Activated CD4-positive, alpha-beta T cell treated with anti-CD3 and anti-CD28 coated beads for 36 hours (primary cell): ENCODE measurements at regions of chr17 and their contacts with region 1.

Region 1: GRCh38 chr17:81860756-81861518 is 602 bp upstream of the P4HB start:
- DNase-seq: peak; percentile 99
- ATAC-seq: peak; percentile 91
- H3K4me3 Mint-ChIP-seq: peak overlapping the region; percentile 99
- H3K27ac Mint-ChIP-seq: peak overlapping the region; percentile 98
- H3K4me1 Mint-ChIP-seq: peaks cover 50% of the 10 kb centered on the region
- H3K27me3 Mint-ChIP-seq: no peaks in the 10 kb centered on the region

Region 2: GRCh38 chr17:81523475-81524340 is 337.2 kb before region 1 on chr17:
- CTCF ChIA-PET with region 1: no interaction called
- POLR2A ChIA-PET with region 1: no interaction called
- intact Hi-C with region 1: no loop called
- DNase-seq: no peak
- ATAC-seq: no peak
- H3K4me3 Mint-ChIP-seq: no peak overlapping the region
- H3K27ac Mint-ChIP-seq: no peak overlapping the region
- H3K4me1 Mint-ChIP-seq: no peaks in the 10 kb centered on the region
- H3K27me3 Mint-ChIP-seq: peaks cover 3% of the 10 kb centered on the region

Region 3: DNA sequence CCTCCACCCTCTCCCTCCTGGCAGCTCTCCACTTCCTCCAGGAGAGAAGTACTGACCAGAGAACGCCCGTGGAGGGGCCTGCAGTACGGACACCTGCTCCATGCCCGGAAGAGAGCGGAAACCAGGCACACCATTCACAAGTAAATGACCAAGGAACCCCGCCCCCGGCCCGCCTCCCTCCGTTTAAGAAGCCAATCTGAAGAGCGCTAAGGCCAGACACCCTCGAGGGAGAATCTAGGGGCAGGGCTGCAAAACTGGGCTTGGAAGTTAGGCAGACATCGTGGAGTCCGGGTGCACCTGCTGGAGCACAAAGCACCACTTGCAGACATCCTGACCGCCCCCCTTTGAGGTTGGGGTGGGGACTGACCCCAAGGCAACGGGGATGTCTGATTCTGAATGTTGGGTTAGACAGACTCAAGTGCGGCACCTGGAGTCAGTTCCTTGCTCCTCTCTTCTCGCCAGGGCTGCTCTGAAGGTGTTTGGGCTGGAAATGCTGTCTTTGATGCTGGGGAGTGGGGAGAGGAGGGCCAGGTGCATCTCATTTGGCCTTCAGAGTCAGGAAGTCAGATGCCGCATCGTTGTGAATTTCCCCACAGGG is 307.8 kb before region 1 on chr17:
- CTCF ChIA-PET with region 1: no interaction called
- POLR2A ChIA-PET with region 1: no interaction called
- intact Hi-C with region 1: loop called in 1 of 2 experiments (anchors 1 kb)
- DNase-seq: peak; percentile 91
- ATAC-seq: peak; percentile 78
- H3K4me3 Mint-ChIP-seq: peak overlapping the region; percentile 89
- H3K27ac Mint-ChIP-seq: peak overlapping the region; percentile 86
- H3K4me1 Mint-ChIP-seq: peaks cover 38% of the 10 kb centered on the region
- H3K27me3 Mint-ChIP-seq: no peaks in the 10 kb centered on the region

Region 4: GRCh38 chr17:81566461-81567126 is 294.3 kb before region 1 on chr17:
- CTCF ChIA-PET with region 1: no interaction called
- POLR2A ChIA-PET with region 1: no interaction called
- intact Hi-C with region 1: no loop called
- DNase-seq: no peak
- ATAC-seq: no peak
- H3K4me3 Mint-ChIP-seq: no peak overlapping the region
- H3K27ac Mint-ChIP-seq: no peak overlapping the region
- H3K4me1 Mint-ChIP-seq: no peaks in the 10 kb centered on the region
- H3K27me3 Mint-ChIP-seq: no peaks in the 10 kb centered on the region

Region 5: GRCh38 chr17:81702971-81703746 is 157.8 kb before region 1 on chr17 and contains the start of gene MRPL12:
- CTCF ChIA-PET with region 1: no interaction called
- POLR2A ChIA-PET with region 1: interaction called, 3 read pairs
- intact Hi-C with region 1: loop called in 1 of 2 experiments (anchors 1 kb)
- DNase-seq: peak; percentile 95
- ATAC-seq: peak; percentile 89
- H3K4me3 Mint-ChIP-seq: peak within 1 kb of the TSS; percentile 86
- H3K27ac Mint-ChIP-seq: peak within 1 kb of the TSS; percentile 97
- H3K4me1 Mint-ChIP-seq: peaks cover 24% of the 10 kb centered on the region
- H3K27me3 Mint-ChIP-seq: no peaks in the 10 kb centered on the region
- total RNA-seq, gene MRPL12: 94.0 to 116 TPM

Region 6: DNA sequence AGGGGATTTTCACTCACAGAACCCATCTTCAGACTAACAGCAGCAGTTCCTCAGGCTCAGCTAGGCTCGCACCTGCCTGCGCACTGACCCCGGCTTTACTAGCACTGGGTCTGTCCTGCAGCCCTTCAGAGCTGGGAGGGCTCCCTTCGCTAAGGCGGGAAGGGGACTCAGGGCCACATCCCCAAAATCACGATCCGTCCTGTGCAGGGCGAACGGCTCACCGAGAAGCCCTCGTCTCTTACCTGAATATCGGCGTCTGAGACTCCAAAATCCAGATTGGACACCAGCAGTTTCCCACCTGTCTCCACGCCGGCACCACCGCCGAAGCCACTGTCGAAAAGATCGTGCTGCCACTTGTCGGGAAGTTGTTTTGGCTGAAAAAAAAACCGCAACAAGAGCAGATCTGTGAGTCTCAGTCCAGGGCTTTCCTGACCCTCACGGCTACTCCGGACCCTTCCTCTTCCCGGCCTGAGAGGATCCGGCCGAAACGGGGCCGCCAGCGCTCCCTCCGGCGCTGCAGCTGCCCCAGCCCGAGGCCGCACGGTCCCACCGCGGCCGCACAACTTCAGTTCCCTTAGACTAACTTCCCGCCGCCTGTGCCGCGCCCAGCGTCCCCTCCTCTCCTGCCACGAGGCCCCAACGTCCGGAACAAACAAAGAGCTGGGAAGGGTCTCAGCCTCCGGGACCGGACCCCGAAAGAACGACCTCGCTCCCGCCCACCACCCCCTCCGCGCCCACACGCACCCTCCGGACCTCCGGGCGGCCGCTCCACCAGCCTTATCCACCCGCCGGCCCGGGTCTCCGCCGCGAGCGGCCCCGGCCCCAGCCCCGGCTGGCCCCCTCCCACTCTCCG is 29.7 kb after region 1 on chr17:
- CTCF ChIA-PET with region 1: interaction called, 5 read pairs
- POLR2A ChIA-PET with region 1: interaction called, 5 read pairs
- intact Hi-C with region 1: loop called (anchors 1 kb)
- DNase-seq: peak; percentile 51
- ATAC-seq: no peak
- H3K4me3 Mint-ChIP-seq: peak overlapping the region; percentile 85
- H3K27ac Mint-ChIP-seq: peak overlapping the region; percentile 93
- H3K4me1 Mint-ChIP-seq: peaks cover 32% of the 10 kb centered on the region
- H3K27me3 Mint-ChIP-seq: no peaks in the 10 kb centered on the region

Region 7: GRCh38 chr17:81941790-81942553 is 81.0 kb after region 1 on chr17:
- CTCF ChIA-PET with region 1: no interaction called
- POLR2A ChIA-PET with region 1: no interaction called
- intact Hi-C with region 1: loop called in 1 of 2 experiments (anchors 1 kb)
- DNase-seq: no peak
- ATAC-seq: no peak
- H3K4me3 Mint-ChIP-seq: no peak overlapping the region
- H3K27ac Mint-ChIP-seq: no peak overlapping the region
- H3K4me1 Mint-ChIP-seq: peaks cover 5% of the 10 kb centered on the region
- H3K27me3 Mint-ChIP-seq: peaks cover 5% of the 10 kb centered on the region

Region 8: DNA sequence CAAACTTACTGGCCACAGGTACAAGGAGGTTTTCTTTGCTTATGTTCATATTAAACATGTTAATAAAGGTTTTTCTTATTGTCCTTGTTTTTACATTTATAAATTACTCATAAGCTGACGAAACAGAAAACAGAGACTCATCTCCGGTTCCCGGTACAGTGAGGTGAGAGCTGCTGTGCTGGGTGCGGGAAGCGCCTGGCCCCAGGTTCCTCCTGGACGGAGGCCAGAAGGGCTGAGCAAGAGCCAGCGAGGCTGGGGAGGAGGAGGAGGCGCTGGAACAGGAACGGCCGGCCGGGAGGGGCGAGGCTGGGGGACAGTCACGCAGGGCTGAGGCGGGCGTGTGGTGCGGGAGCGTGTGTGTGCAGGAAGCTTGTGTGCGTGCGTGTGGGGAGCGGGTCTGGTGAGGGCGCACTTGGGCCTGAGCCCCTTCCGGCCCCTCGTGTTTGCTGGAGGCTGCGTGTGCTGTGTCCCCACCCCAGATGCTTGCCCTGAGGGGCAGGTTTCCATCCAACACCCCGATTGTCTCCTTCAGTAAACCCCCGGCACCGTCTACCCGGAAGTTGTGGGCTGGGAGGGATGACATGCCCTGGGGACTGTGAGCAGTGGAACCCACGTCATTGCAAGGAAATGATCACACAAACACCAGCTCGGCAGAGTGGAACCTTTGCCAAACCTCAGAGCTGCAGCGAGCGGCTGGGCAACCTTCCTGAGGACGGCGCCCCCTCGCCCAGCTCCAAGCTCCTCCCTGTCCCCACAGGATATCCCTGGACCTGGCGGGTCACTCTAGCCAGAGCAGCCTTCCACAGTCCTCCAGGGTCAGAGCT is 437.0 kb after region 1 on chr17:
- CTCF ChIA-PET with region 1: no interaction called
- POLR2A ChIA-PET with region 1: no interaction called
- intact Hi-C with region 1: loop called in 1 of 2 experiments (anchors 2 kb)
- DNase-seq: peak; percentile 96
- ATAC-seq: peak; percentile 62
- H3K4me3 Mint-ChIP-seq: peak overlapping the region; percentile 80
- H3K27ac Mint-ChIP-seq: peak overlapping the region; percentile 100
- H3K4me1 Mint-ChIP-seq: peaks cover 70% of the 10 kb centered on the region
- H3K27me3 Mint-ChIP-seq: no peaks in the 10 kb centered on the region